GM12878 (cell line): ENCODE measurements at regions of chr11 and their contacts with region 1.

Region 1: GRCh38 chr11:65117216-65118096 is at the start of gene ZNHIT2:
- DNase-seq: peak; percentile 97
- ATAC-seq: peak; percentile 75
- H3K4me3 ChIP-seq: peak within 1 kb of the TSS; percentile 76
- H3K27ac ChIP-seq: peak within 1 kb of the TSS; percentile 68
- H3K4me1 ChIP-seq: peaks cover 29% of the 10 kb centered on the region
- H3K27me3 ChIP-seq: no peaks in the 10 kb centered on the region
- CTCF ChIP-seq: peak; percentile 85 to 97 (median 93); a peak in 5 of 6 replicates
- EP300 ChIP-seq: no peak
- POLR2A ChIP-seq: peak; percentile 95
- RAD21 ChIP-seq: peak; percentile 78
- polyA plus RNA-seq, gene ZNHIT2: 0.40 TPM in 1 of 2 experiments, not detected in the other

Region 2: DNA sequence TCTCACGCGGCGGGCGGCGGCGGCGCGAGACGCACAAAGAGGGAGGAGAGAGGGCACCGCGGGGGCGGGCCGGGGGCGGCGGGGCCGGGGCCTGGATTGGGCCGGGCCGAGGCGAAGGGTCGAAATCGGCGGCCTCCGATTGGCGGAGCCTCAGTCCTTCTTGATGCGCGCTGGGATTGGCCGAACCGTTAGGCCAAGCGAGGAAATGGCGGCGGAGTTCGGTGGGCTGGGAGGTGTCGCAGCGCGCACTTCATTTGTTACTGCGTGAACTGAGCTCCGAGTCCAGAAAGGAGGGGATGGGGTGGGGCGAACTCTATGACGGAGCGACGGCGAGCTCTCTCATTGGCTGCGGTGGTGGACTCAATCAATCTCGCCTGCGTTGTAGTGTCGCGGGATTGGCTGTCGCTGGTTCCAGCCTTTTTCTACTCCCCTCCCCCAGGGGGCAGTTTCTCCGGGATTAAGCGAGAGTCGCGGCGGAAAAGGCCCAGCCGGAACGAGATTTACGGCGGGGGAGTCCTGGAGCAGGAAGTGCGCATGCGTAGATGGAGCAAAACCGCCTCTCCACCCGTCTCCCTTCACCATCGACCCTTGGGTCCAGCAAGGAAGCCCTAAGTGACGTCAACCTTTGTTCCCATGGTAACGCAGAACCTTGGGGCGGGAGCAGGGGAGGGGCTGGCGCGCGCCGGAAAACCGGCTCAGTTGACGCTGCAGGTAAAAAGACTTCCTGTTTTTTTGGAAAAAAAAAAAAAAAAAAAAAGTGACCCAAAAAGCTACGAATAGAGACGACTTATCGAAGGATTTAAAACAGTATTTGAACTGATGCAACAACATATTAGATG is 338.7 kb before region 1 on chr11 and contains the start of gene SF1:
- CTCF ChIA-PET with region 1: interaction called, 3 read pairs
- POLR2A ChIA-PET with region 1: interaction called, 6 read pairs
- RAD21 ChIA-PET with region 1: interaction called, 3 read pairs
- SMC1A ChIA-PET with region 1: no interaction called
- in situ Hi-C with region 1: no loop called
- intact Hi-C with region 1: loop called (anchors 10 kb)
- DNase-seq: peak; percentile 100
- ATAC-seq: peak; percentile 93
- H3K4me3 ChIP-seq: peak within 1 kb of the TSS; percentile 80
- H3K27ac ChIP-seq: peak within 1 kb of the TSS; percentile 86
- H3K4me1 ChIP-seq: peaks cover 31% of the 10 kb centered on the region
- H3K27me3 ChIP-seq: no peaks in the 10 kb centered on the region
- CTCF ChIP-seq: no peak
- EP300 ChIP-seq: peak in 1 of 2 experiments; percentile 38; a peak in 1 of 4 replicates
- POLR2A ChIP-seq: peak; percentile 97
- RAD21 ChIP-seq: no peak
- polyA plus RNA-seq, gene SF1: 13.6 to 29.6 TPM

Region 3: DNA sequence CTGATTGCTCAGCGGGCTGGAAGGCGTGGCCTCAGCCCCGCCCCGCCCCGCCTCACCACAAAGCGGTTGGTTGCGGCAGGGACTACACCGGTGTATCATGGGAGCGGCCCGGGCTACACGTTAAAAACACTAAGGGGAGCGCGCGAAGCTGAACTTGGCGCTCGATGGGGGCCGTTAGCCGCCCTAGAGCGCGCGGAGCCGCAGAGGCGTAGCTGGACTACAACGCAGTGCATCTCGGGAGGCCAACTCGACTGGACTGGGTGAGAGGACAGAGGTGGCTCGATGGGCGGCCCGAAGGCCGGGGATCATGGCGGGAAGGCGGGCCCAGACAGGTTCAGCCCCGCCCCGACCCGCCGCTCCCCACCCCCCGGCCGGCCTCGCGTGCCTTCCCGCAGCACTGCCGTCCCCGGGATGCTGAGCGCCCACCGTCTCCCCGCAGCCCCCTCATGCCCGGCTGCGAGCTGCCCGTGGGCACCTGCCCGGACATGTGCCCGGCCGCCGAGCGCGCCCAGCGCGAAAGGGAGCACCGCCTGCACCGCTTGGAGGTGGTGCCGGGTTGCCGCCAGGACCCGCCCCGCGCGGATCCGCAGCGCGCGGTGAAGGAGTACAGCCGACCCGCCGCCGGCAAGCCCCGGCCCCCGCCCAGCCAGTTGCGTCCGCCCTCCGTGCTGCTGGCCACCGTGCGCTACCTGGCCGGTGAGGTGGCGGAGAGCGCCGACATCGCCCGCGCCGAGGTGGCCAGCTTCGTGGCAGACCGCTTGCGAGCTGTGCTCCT is 76.4 kb before region 1 on chr11 and contains the start of gene SAC3D1:
- CTCF ChIA-PET with region 1: interaction called, 3 read pairs
- POLR2A ChIA-PET with region 1: interaction called, 6 read pairs
- RAD21 ChIA-PET with region 1: interaction called, 3 read pairs
- SMC1A ChIA-PET with region 1: no interaction called
- in situ Hi-C with region 1: no loop called
- intact Hi-C with region 1: loop called (anchors 2 kb)
- DNase-seq: peak; percentile 86
- ATAC-seq: peak; percentile 98
- H3K4me3 ChIP-seq: peak within 1 kb of the TSS; percentile 81
- H3K27ac ChIP-seq: peak within 1 kb of the TSS; percentile 85
- H3K4me1 ChIP-seq: peaks cover 17% of the 10 kb centered on the region
- H3K27me3 ChIP-seq: no peaks in the 10 kb centered on the region
- CTCF ChIP-seq: no peak
- EP300 ChIP-seq: no peak
- POLR2A ChIP-seq: peak; percentile 71
- RAD21 ChIP-seq: no peak
- polyA plus RNA-seq, gene SAC3D1: 0.16 to 1.7 TPM

Region 4: DNA sequence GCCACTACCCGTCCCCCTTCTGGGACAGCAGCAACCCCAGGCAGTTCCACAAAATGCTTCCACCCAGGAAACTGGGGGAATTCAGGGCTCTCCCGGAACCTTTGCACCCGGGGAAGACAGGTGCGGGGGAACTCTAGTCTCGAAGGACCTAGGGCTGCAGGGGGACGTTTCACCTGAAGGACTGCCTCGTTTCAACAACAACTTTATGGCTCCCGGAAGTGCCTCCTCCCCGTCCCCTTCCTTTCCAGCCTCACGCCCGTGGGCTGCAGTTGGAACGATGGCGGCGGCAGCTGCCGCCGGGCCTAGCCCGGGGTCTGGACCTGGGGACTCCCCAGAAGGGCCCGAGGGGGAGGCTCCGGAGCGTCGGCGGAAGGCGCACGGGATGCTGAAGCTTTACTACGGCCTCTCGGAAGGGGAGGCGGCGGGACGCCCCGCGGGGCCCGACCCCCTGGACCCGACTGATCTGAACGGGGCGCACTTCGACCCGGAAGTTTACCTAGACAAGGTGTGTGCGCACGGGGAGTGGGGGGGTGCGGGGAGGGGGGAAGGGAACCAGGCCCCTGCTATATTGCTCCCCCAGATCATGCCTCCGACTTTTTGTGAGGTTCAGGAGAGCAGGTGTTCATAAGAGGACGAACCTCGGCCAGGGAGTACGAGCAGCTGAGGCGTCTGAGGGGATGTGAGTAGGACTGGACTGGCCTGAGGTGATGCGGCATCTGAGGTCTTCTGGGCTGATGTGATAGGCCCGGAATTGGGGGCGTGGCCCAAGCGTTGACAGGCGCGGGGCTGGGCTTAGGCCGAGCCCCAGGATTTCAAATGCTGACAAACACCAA is 21.3 kb before region 1 on chr11 and contains the start of gene VPS51:
- CTCF ChIA-PET with region 1: interaction called, 76 read pairs
- POLR2A ChIA-PET with region 1: interaction called, 3 read pairs
- RAD21 ChIA-PET with region 1: interaction called, 3 read pairs
- SMC1A ChIA-PET with region 1: interaction called, 4 read pairs
- in situ Hi-C with region 1: no loop called
- intact Hi-C with region 1: no loop called
- DNase-seq: peak; percentile 51
- ATAC-seq: peak; percentile 99
- H3K4me3 ChIP-seq: peak within 1 kb of the TSS; percentile 96
- H3K27ac ChIP-seq: peak within 1 kb of the TSS; percentile 45
- H3K4me1 ChIP-seq: peaks cover 4% of the 10 kb centered on the region
- H3K27me3 ChIP-seq: no peaks in the 10 kb centered on the region
- CTCF ChIP-seq: no peak
- EP300 ChIP-seq: 0 out of 4 replicates have a peak, but pooled peaks of 1 of the 2 experiments have one; percentile 19
- POLR2A ChIP-seq: peak; percentile 99
- RAD21 ChIP-seq: peak; percentile 11; the same call in 1 of the 2 replicates
- polyA plus RNA-seq, gene VPS51: 1.5 to 8.6 TPM

Region 5: DNA sequence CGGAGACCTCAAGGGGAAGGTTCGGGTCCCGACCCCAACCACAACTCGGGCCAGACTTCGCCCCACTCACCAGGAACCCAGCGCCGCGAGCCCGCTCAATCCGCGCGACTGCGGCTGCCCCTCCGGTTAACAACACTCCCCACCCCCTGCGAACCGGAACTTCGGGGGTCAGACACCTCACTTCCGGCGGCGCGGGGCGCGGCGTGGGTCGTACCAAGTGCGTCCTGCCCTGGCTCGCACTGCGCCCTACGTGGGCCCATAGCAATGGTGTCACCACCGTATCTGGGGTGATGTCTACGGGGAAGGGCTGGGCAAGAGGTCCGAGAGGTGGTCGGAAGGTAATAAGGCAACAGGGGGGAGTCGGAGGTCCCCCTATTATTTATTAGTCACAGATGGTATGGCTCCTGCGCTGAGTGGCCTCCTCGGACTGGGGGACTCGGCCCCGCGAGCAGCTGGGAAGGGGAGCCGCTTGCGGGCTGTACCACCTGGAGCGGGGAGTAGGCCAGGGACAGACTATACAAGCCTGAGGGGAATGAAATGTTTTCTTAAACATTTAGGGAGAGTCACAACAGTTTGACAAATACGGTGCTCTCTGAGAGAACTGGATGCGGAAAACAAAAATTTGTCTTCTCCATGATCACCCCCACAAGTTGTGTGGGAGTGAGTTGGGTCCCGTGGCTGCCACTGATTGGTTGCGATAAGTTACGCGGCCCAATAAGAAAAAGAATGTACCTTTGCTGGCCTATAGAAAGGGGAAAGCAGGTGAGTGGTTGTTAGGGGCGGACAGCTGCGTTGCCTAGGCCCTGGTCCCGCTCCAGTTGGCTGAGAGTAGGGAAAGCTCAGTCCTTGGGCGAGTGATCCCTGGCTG is 17.2 kb after region 1 on chr11 and contains the start of gene SYVN1:
- CTCF ChIA-PET with region 1: interaction called, 40 read pairs
- POLR2A ChIA-PET with region 1: interaction called, 28 read pairs
- RAD21 ChIA-PET with region 1: interaction called, 14 read pairs
- SMC1A ChIA-PET with region 1: interaction called, 13 read pairs
- in situ Hi-C with region 1: no loop called
- intact Hi-C with region 1: no loop called
- DNase-seq: peak; percentile 89
- ATAC-seq: peak; percentile 91
- H3K4me3 ChIP-seq: peak within 1 kb of the TSS; percentile 99
- H3K27ac ChIP-seq: peak within 1 kb of the TSS; percentile 99
- H3K4me1 ChIP-seq: peaks cover 21% of the 10 kb centered on the region
- H3K27me3 ChIP-seq: no peaks in the 10 kb centered on the region
- CTCF ChIP-seq: 0 out of 6 replicates have a peak, but pooled peaks of 1 of the 3 experiments have one; percentile 1
- EP300 ChIP-seq: 0 out of 4 replicates have a peak, but pooled peaks of 1 of the 2 experiments have one; percentile 35
- POLR2A ChIP-seq: peak; percentile 97
- RAD21 ChIP-seq: no peak
- polyA plus RNA-seq, gene SYVN1: 0.79 to 2.6 TPM

Region 6: DNA sequence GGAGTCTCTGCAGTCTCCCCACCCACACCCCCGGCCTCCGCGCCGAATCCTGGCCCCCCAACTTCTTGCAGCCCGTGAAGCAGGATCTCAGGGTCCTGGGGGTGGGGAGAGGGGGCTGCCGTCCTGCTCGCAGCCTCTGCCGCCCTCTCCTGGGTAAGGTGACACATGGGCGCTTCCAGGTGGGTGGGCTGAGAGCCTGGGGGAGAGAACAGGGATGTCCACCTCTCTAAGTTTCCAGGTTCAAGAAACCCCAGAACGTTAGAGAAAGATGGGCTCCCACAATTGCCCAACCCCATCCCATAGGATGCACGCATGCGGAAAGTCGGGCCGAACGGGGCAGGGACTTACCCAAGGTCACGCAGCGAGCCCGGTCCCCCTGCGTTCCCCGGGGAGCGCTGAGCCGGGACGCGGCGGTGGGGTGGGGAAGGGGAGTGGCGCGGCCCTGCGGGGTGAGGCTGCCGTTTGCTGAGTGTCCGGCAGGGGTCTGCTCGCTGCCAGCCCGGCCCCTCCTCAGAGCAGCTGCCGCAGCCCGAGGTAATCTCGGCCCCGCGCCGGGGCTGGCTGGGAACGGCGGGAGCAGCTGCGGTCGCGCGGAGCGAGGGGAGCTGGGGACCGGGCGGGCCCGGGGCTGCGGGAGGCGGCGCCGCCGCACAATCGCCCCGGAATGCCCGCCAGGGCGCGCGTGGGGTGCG is 63.6 kb after region 1 on chr11:
- CTCF ChIA-PET with region 1: interaction called, 93 read pairs
- POLR2A ChIA-PET with region 1: interaction called, 9 read pairs
- RAD21 ChIA-PET with region 1: interaction called, 59 read pairs
- SMC1A ChIA-PET with region 1: interaction called, 12 read pairs
- in situ Hi-C with region 1: no loop called
- intact Hi-C with region 1: loop called (anchors 5 kb)
- DNase-seq: peak; percentile 19
- ATAC-seq: peak; percentile 88
- H3K4me3 ChIP-seq: peak overlapping the region; percentile 100
- H3K27ac ChIP-seq: peak overlapping the region; percentile 93
- H3K4me1 ChIP-seq: peaks cover 6% of the 10 kb centered on the region; the same call in 1 of the 2 replicates
- H3K27me3 ChIP-seq: no peaks in the 10 kb centered on the region
- CTCF ChIP-seq: peak; percentile 66 to 83 (median 72)
- EP300 ChIP-seq: no peak
- POLR2A ChIP-seq: no peak
- RAD21 ChIP-seq: peak; percentile 87